ENCODE measurements at regions of chr15 and their contacts with region 1.

Region 1: GRCh38 chr15:92938387-92938786 is 38.3 kb downstream of the CHD2 start:
- DNase-seq: no peak
- ATAC-seq: no peak
- H3K4me3 Mint-ChIP-seq: no peak overlapping the region
- H3K27ac Mint-ChIP-seq: no peak overlapping the region
- H3K4me1 Mint-ChIP-seq: peaks cover 33% of the 10 kb centered on the region
- H3K27me3 Mint-ChIP-seq: no peaks in the 10 kb centered on the region

Region 2: GRCh38 chr15:92868992-92869988 is 69.1 kb before region 1 on chr15:
- CTCF ChIA-PET with region 1: no interaction called
- POLR2A ChIA-PET with region 1: no interaction called
- DNase-seq: no peak
- ATAC-seq: no peak
- H3K4me3 Mint-ChIP-seq: no peak overlapping the region
- H3K27ac Mint-ChIP-seq: no peak overlapping the region
- H3K4me1 Mint-ChIP-seq: no peaks in the 10 kb centered on the region
- H3K27me3 Mint-ChIP-seq: no peaks in the 10 kb centered on the region

Region 3: DNA sequence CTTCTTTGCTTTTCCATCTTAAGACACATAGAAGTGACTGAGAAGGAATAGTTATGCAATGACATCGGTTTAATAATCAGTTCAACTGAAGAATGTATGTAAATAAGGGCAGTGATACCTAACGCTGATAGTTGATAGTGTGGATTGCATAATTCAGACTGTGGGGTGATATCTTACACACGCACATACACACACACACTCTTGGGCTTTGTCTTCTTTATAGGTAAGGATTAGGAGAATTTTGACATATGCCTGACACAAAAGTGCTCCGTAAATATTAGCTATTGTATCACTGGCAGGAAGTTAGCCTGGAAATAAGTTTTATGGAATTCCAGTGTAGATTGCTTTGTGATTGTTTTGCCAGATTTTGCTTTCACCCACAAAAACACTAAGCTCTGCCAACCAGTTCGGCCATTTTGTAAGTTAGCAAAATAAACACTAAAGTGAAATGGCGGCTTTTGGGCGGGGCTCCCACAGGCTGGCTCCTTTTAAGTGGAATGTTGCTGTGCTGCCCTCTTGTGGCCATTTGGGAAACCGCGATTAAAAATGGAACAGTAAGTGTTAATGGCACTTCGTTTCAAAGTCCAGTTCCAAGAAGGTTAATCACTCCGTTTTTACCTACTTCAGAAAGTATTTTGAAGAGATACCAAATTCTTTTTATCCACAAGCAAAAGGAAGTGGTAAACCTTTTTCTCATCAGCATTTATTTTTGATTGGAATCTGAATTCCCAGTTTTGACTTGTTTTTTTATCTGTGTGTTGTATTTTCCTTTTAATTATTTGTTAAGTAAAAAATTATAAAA is 20.6 kb before region 1 on chr15:
- CTCF ChIA-PET with region 1: interaction called, 10 read pairs
- POLR2A ChIA-PET with region 1: no interaction called
- DNase-seq: peak; percentile 97
- ATAC-seq: peak; percentile 36
- H3K4me3 Mint-ChIP-seq: peak overlapping the region; percentile 12
- H3K27ac Mint-ChIP-seq: peak overlapping the region; percentile 79
- H3K4me1 Mint-ChIP-seq: peaks cover 84% of the 10 kb centered on the region
- H3K27me3 Mint-ChIP-seq: no peaks in the 10 kb centered on the region

Region 4: GRCh38 chr15:92924216-92924615 is 14.2 kb before region 1 on chr15:
- CTCF ChIA-PET with region 1: interaction called, 12 read pairs
- POLR2A ChIA-PET with region 1: no interaction called
- DNase-seq: no peak
- ATAC-seq: no peak
- H3K4me3 Mint-ChIP-seq: no peak overlapping the region
- H3K27ac Mint-ChIP-seq: peak overlapping the region; percentile 32
- H3K4me1 Mint-ChIP-seq: peaks cover 63% of the 10 kb centered on the region
- H3K27me3 Mint-ChIP-seq: no peaks in the 10 kb centered on the region

Region 5: GRCh38 chr15:93048759-93049161 is 110.4 kb after region 1 on chr15:
- CTCF ChIA-PET with region 1: no interaction called
- POLR2A ChIA-PET with region 1: no interaction called
- DNase-seq: no peak
- ATAC-seq: no peak
- H3K4me3 Mint-ChIP-seq: no peak overlapping the region
- H3K27ac Mint-ChIP-seq: no peak overlapping the region
- H3K4me1 Mint-ChIP-seq: peaks cover 20% of the 10 kb centered on the region
- H3K27me3 Mint-ChIP-seq: peaks cover 8% of the 10 kb centered on the region

Measured in activated CD8-positive, alpha-beta T cell treated with anti-CD3 and anti-CD28 coated beads, Interleukin-2, amount 10 ng/mL, durations not matched to agents 7 days and 5 days (primary cell).